Uterus (tissue), 4 donors: ENCODE measurements at regions of chr2 and their contacts with region 1.

Region 1: DNA sequence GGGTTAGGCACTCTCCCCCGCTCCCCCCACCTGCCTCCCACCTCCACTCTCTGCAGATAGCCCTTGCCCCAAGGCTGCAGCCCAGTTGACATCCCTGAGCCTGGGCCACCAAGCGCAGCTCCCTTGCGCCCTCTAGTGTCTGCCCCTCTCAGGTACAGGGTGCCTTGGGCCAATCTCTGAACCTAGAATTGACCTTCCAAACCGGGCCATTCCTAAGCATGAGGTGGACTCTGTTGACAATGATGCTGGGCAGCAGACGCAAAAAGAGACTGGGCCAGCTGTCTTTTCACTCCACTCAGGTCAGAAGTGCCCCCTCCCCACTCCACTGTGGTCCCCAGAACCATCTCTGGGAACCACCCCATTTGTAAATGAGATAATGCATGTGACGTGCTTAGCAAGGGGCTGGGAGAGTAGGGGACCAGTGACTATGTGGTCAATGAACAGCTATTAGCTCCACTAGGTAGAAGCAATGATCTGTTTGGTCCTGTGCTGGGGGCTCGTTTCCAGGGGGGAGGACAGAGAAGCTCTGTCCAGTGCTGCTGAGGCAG is 43.3 kb upstream of the PLB1 start:
- DNase-seq: peak; percentile 67 to 68
- H3K4me3 ChIP-seq: no peak overlapping the region
- H3K27ac ChIP-seq: no peak overlapping the region
- H3K4me1 ChIP-seq: no peaks in the 10 kb centered on the region
- H3K27me3 ChIP-seq: no peaks in the 10 kb centered on the region
- CTCF ChIP-seq: peak; percentile 82 to 88 (median 88)
- POLR2A ChIP-seq: no peak

Region 2: GRCh38 chr2:27703638-27704341 is 748.8 kb before region 1 on chr2:
- intact Hi-C with region 1: loop called (anchors 5 kb)
- DNase-seq: peak; percentile 87 to 90
- H3K4me3 ChIP-seq: no peak overlapping the region
- H3K27ac ChIP-seq: peak overlapping the region; percentile 49 to 91
- H3K4me1 ChIP-seq: no peaks in the 10 kb centered on the region
- H3K27me3 ChIP-seq: no peaks in the 10 kb centered on the region
- CTCF ChIP-seq: peak; percentile 89 to 95 (median 90)
- POLR2A ChIP-seq: no peak